HepG2 (cell line): ENCODE measurements at regions of chr22 and their contacts with region 1.

Region 1: DNA sequence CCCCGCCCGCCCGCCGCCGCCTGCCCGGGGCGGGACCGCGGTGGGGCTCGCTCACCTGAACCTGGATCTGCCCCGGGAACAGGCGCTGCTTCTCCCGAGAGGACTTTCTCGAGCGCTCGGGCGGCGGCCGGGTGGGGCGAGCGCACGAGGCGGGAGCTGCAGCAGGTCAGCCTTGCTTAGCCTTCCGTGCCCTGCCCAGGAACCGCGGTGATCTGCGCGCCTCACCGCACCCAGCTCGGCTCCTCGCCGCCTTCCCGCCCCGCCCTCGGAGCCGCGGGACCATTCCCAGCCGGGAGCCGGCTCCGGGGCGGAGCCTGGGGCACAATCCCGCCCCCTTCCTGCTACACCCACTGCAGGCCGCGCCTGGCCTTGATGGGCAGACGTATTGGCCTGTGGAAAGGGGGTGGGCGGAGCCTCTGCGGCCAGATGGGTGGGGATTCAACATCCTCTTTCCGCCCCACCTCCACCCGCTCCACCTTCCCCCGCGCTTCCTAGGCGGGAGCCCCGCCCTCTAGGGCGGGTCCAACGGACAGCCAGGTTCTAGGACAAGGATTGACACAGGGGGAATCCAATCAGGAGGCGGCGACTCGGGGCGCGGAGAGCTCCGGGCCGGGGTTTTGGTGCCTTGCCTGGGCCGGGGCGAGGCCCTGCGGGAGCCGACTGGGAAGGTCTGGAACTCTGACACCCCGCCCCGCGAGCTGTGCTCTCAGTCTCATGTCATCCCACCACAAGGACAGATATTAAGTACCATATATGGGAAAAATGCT is at the start of gene MYH9:
- DNase-seq: peak; percentile 98
- ATAC-seq: peak; percentile 91
- H3K4me3 ChIP-seq: peak within 1 kb of the TSS; percentile 87 to 98 (median 90)
- H3K27ac ChIP-seq: peak within 1 kb of the TSS; percentile 70
- H3K4me1 ChIP-seq: peaks cover 51% of the 10 kb centered on the region
- H3K27me3 ChIP-seq: no peaks in the 10 kb centered on the region
- CTCF ChIP-seq: no peak
- EP300 ChIP-seq: no peak
- POLR2A ChIP-seq: peak; percentile 95 to 98
- RAD21 ChIP-seq: peak; percentile 46; the same call in 1 of the 2 replicates
- total RNA-seq, gene MYH9: 98.5 and 125 TPM in 2 replicates

Region 2: DNA sequence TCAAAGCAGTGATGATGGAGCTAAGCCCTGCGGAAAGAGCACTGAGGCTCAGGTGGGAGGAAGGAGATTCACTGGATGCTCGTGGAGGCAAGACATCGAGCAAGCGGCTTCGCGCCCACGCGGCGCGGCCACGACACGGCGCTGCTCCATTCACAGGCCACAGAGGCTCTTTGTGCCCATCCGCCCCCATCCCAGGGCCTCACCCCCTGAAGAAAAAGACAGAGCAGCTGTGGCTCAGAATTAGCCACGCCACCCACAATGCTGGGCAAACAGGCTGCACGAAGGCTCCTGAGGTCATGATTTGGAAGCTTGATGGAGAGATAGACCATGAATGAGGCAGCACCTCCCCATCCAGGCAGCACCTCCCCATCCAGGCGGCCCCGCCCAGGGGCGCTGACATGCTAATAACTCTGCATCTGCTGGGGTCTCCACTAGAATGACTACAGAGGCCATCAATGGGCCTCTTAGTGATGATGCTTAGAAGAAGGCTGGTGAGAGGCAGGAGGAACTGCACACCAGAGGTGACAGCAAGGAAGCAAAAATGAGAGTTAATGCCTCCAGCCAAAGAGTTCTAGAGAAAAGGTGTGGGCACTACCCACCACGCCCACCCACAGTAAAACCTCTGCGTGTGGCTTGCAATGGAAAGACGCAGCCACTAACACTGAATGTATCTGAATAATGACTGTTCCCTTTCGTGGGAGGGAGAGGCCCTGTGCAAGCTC is 43.7 kb before region 1 on chr22:
- CTCF ChIA-PET with region 1: no interaction called
- POLR2A ChIA-PET with region 1: interaction called, 8 read pairs
- in situ Hi-C with region 1: no loop called
- intact Hi-C with region 1: loop called (anchors 1 kb)
- DNase-seq: no peak
- ATAC-seq: no peak; the same call in 2 of the 3 replicates
- H3K4me3 ChIP-seq: no peak overlapping the region
- H3K27ac ChIP-seq: peak overlapping the region; percentile 85
- H3K4me1 ChIP-seq: peaks cover 85% of the 10 kb centered on the region
- H3K27me3 ChIP-seq: no peaks in the 10 kb centered on the region
- CTCF ChIP-seq: no peak
- EP300 ChIP-seq: no peak
- POLR2A ChIP-seq: no peak
- RAD21 ChIP-seq: no peak

Region 3: GRCh38 chr22:36359181-36359996 is 28.5 kb before region 1 on chr22:
- CTCF ChIA-PET with region 1: no interaction called
- POLR2A ChIA-PET with region 1: interaction called, 23 read pairs
- in situ Hi-C with region 1: no loop called
- intact Hi-C with region 1: no loop called
- DNase-seq: no peak
- ATAC-seq: no peak
- H3K4me3 ChIP-seq: no peak overlapping the region
- H3K27ac ChIP-seq: peak overlapping the region; percentile 50
- H3K4me1 ChIP-seq: peaks cover 100% of the 10 kb centered on the region
- H3K27me3 ChIP-seq: no peaks in the 10 kb centered on the region
- CTCF ChIP-seq: no peak
- EP300 ChIP-seq: no peak
- POLR2A ChIP-seq: no peak
- RAD21 ChIP-seq: no peak

Region 4: DNA sequence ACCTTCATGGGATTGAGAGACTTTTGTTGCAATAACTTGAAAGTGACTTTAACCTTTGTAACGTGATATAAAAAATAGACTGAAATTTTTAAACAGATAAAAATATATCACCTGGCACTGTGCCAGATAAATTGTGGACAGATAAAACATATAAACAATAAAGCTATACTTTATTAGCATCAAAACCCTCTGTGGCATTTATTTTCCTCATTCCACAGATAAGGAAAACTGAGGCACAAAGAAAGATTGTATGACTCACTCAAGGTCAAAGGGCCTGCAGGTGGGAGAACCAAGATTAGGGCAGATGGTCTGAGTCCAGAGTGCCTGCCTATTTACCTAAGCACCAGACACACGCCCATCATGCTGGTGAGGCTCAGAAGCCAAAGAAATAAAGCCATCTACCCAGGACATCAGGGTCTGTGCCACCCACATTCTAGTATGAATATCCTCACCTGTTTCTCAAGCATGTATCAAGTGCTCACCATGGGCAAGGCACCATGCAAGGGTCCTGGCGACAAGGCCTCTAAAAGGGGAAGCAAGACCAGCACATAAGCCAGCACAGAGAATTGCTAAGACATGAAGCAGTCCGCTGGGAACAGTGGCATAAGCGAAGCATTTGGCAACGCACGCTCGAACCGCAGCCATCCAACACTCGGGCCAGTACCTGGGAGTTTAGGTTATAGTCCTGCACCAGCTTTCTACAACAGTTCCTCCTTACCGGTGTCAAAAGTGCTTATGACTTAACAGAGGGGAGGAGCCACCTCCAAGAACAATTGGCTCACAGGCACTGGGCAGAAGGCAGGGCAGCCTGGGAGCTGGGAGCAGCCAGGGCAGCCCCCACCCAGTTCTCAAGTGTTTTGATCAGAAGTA is 17.8 kb before region 1 on chr22:
- CTCF ChIA-PET with region 1: no interaction called
- POLR2A ChIA-PET with region 1: interaction called, 14 read pairs
- in situ Hi-C with region 1: no loop called
- intact Hi-C with region 1: loop called (anchors 2 kb)
- DNase-seq: peak; percentile 72
- ATAC-seq: peak; percentile 63
- H3K4me3 ChIP-seq: peak overlapping the region in 1 of 3 experiments; percentile 57; a peak in 2 of 6 replicates
- H3K27ac ChIP-seq: peak overlapping the region; percentile 66
- H3K4me1 ChIP-seq: peaks cover 96% of the 10 kb centered on the region
- H3K27me3 ChIP-seq: no peaks in the 10 kb centered on the region
- CTCF ChIP-seq: no peak
- EP300 ChIP-seq: 0 out of 4 replicates have a peak, but pooled peaks of 1 of the 2 experiments have one; percentile 40
- POLR2A ChIP-seq: no peak
- RAD21 ChIP-seq: no peak

Region 5: DNA sequence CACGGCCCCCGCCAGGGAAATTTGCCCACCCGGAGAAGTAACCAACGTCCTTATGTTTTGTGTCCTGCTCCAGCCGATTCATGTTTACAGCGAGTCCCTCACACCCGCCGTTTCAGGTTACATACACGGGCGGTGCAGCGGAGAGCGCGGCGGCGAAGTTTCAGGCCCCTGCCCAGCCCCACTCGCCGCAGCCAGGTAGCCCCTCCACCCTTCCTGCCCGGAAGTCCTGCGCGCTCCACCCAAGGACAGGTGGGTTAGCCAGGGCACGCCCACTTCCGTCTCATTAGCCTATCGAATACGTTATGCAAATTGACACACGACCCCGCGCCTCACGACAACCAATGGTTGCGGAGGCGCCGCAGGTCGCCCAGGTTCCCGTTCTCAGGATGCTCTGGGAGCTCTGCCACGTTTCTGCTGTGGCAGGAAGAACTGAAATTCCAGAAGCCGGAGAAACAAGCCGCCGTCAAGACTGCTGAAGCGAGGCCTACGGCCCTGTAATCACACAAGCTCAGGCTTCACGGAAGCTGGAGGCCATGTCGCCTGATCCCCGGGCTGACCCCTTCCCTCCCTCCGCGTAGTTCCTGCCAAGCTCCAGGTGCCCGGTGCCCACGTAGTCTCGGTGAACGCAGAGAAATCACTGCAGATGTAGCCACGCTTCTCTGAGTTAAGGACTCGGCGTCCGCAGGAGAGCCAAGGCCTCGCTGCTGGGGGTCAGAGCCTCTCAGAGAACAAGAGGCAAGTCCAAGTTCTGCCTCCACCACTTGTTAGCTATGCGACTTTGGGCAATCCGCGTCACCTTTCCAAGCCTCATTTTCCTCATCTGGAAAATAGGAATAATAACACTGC is 22.2 kb after region 1 on chr22:
- CTCF ChIA-PET with region 1: no interaction called
- POLR2A ChIA-PET with region 1: interaction called, 35 read pairs
- in situ Hi-C with region 1: no loop called
- intact Hi-C with region 1: no loop called
- DNase-seq: peak; percentile 97
- ATAC-seq: peak; percentile 94
- H3K4me3 ChIP-seq: peak overlapping the region; percentile 56 to 72 (median 56)
- H3K27ac ChIP-seq: peak overlapping the region; percentile 90
- H3K4me1 ChIP-seq: peaks cover 74% of the 10 kb centered on the region
- H3K27me3 ChIP-seq: no peaks in the 10 kb centered on the region
- CTCF ChIP-seq: no peak
- EP300 ChIP-seq: no peak
- POLR2A ChIP-seq: peak; percentile 83 to 87
- RAD21 ChIP-seq: no peak

Region 6: DNA sequence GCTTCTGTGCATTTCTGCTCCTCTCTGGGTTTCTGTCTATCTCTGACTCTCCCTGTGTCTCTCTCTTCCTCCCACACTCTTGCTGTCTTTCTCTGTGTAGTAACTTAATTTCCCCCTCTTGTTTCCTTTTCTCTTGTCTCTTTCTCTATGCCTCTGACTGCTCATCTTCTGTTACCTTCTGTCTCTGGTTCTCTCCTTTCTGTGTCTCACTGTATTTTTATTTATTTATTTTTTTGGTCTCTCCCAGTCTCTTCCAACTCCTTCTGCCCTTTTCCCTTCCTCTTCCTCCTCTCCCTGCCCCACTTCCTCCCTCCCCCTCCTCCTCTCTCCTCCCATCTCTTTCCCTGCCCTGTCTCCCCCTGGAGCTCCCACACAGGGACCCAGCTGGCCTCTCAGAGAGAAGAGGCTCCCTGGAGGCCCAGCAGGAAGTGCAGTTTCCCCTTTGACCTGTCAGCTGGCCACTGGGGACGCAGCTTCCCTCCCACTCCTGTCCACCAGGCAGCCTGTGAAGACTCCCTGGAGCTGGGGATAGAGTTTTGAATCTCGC is 38.1 kb after region 1 on chr22:
- CTCF ChIA-PET with region 1: no interaction called
- POLR2A ChIA-PET with region 1: interaction called, 15 read pairs
- in situ Hi-C with region 1: no loop called
- intact Hi-C with region 1: no loop called
- DNase-seq: peak; percentile 74
- ATAC-seq: peak; percentile 93
- H3K4me3 ChIP-seq: no peak overlapping the region
- H3K27ac ChIP-seq: peak overlapping the region; percentile 71
- H3K4me1 ChIP-seq: peaks cover 69% of the 10 kb centered on the region
- H3K27me3 ChIP-seq: no peaks in the 10 kb centered on the region
- CTCF ChIP-seq: peak; percentile 53
- EP300 ChIP-seq: no peak; a peak in 1 of 4 replicates
- POLR2A ChIP-seq: peak in 1 of 2 experiments; percentile 34; a peak in 1 of 4 replicates
- RAD21 ChIP-seq: no peak

Region 7: GRCh38 chr22:36439481-36440271 is 51.7 kb after region 1 on chr22:
- CTCF ChIA-PET with region 1: no interaction called
- POLR2A ChIA-PET with region 1: interaction called, 11 read pairs
- in situ Hi-C with region 1: no loop called
- intact Hi-C with region 1: no loop called
- DNase-seq: peak; percentile 53
- ATAC-seq: peak; percentile 45
- H3K4me3 ChIP-seq: peak overlapping the region in 1 of 3 experiments; percentile 25; a peak in 2 of 6 replicates
- H3K27ac ChIP-seq: peak overlapping the region; percentile 34
- H3K4me1 ChIP-seq: peaks cover 83% of the 10 kb centered on the region
- H3K27me3 ChIP-seq: no peaks in the 10 kb centered on the region; a peak in 1 of 5 replicates
- CTCF ChIP-seq: no peak
- EP300 ChIP-seq: no peak; a peak in 1 of 4 replicates
- POLR2A ChIP-seq: no peak
- RAD21 ChIP-seq: no peak

Region 8: GRCh38 chr22:36506637-36507517 is 118.9 kb after region 1 on chr22 and contains the start of gene FOXRED2:
- CTCF ChIA-PET with region 1: no interaction called
- POLR2A ChIA-PET with region 1: no interaction called
- in situ Hi-C with region 1: no loop called
- intact Hi-C with region 1: no loop called
- DNase-seq: peak; percentile 75
- ATAC-seq: peak; percentile 79
- H3K4me3 ChIP-seq: peak within 1 kb of the TSS; percentile 45 to 66 (median 52); a peak in 5 of 6 replicates
- H3K27ac ChIP-seq: peak within 1 kb of the TSS; percentile 76
- H3K4me1 ChIP-seq: peaks cover 42% of the 10 kb centered on the region
- H3K27me3 ChIP-seq: no peaks in the 10 kb centered on the region
- CTCF ChIP-seq: no peak; the same call in 1 of the 2 replicates
- EP300 ChIP-seq: peak in 1 of 2 experiments; percentile 48; a peak in 2 of 4 replicates
- POLR2A ChIP-seq: peak; percentile 65 to 84
- RAD21 ChIP-seq: peak; percentile 60; the same call in 1 of the 2 replicates
- total RNA-seq, gene FOXRED2: 20.8 and 28.1 TPM in 2 replicates